ENCODE measurements at regions of chr7 and their contacts with region 1.

Region 1: DNA sequence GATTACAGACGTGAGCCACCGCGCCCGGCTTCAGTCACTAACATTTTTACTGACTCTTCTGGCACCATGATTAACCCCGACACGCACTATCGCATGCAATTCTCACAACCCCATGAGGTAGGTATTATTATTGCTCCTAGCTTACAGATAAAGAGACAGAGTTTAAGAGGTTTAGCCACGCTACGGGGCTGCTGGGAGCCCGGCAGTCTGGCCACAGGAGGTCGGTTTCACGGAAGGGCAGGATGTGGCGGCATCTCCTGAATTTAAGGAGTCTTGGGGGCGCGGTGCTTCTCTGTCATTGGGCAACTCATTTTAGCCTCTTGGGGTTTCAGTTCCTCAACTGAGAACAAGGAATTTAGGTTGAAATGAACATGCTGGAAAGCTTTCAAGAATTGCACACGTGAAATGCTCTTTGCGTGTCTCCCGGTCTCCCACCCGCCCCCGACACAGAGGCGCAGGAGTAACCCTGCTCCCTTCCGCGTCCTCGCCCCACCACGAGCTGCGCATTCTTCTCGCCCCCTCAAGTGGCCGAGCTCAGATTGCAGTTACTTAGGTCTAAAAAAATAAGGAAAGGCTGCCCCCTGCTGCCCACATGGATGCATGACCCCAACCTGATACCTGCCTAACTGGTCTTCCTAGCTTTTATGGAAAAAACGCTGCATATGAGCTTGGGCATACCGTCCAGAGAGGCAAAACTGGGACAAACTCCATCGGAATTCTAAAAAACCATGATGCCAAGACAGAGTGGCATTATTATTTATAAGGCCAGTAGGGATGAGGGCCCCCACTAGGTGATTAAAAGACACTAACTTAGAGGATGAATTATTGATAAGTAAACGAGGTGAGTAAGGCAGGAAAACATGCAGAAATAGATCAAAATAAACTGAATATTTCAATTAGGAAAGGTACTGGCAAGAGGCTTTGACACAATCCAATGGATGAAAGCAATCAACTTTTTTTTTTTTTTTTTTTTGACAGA is 12.4 kb downstream of the PRSS2 start:
- DNase-seq: peak; percentile 90
- H3K4me3 ChIP-seq: peak overlapping the region; percentile 38 to 52
- H3K27ac ChIP-seq: no peak overlapping the region
- H3K4me1 ChIP-seq: no peaks in the 10 kb centered on the region; a peak in 1 of 4 replicates
- H3K27me3 ChIP-seq: 0 out of 2 replicates have a peak, but pooled peaks cover 3% of the 10 kb centered on the region
- CTCF ChIP-seq: peak; percentile 99
- EP300 ChIP-seq: peak in 1 of 2 experiments; percentile 40; a peak in 1 of 4 replicates
- RAD21 ChIP-seq: peak; percentile 100

Region 2: GRCh38 chr7:141409801-141410329 is 1373.3 kb before region 1 on chr7:
- CTCF ChIA-PET with region 1: no interaction called
- POLR2A ChIA-PET with region 1: no interaction called
- DNase-seq: peak; percentile 68
- H3K4me3 ChIP-seq: no peak overlapping the region
- H3K27ac ChIP-seq: peak overlapping the region in 1 of 2 experiments; percentile 56; a peak in 2 of 4 replicates
- H3K4me1 ChIP-seq: peaks cover 0 to 16% of the 10 kb centered on the region in 2 experiments; a peak in 2 of 4 replicates
- H3K27me3 ChIP-seq: no peaks in the 10 kb centered on the region
- CTCF ChIP-seq: no peak
- EP300 ChIP-seq: 0 out of 4 replicates have a peak, but pooled peaks of 1 of the 2 experiments have one; percentile 28
- RAD21 ChIP-seq: no peak

Region 3: GRCh38 chr7:142478479-142479072 is 304.6 kb before region 1 on chr7:
- CTCF ChIA-PET with region 1: interaction called, 13 read pairs
- POLR2A ChIA-PET with region 1: no interaction called
- DNase-seq: peak; percentile 52
- H3K4me3 ChIP-seq: no peak overlapping the region
- H3K27ac ChIP-seq: no peak overlapping the region
- H3K4me1 ChIP-seq: peaks cover 7 to 13% of the 10 kb centered on the region in 2 experiments; a peak in 2 of 4 replicates
- H3K27me3 ChIP-seq: no peaks in the 10 kb centered on the region
- CTCF ChIP-seq: peak; percentile 89
- EP300 ChIP-seq: peak in 1 of 2 experiments; percentile 56; a peak in 2 of 4 replicates
- RAD21 ChIP-seq: peak; percentile 71

Region 4: DNA sequence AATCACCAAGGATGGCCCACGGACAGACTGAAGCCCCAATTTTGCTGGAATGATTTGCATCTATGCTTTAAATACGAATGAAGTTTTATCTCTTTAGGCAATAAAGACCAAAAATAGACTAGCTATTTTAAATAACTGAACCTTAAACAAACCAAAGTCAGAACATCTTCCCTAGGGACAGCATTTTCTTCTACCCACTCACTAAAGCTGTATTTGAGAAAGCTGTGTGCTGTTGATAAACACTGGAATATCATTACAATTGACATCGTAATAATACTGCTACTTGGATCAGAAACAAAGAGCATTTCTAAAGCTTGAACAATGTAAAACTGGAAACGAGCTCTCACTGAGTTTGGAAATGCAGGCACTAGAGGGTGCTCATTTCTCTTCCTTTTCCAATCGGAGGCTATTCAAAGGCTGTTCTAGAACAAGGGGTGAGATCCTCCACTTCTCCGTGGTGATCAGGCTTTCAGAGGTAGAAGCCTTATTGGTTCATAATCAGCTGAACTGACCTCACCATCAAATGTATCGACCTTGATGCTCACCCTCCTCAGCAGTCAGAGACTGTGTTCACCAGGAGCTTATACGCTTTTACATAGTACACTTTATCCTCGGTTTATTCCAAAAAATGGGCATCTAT is 259.3 kb before region 1 on chr7:
- CTCF ChIA-PET with region 1: interaction called, 64 read pairs
- POLR2A ChIA-PET with region 1: interaction called, 4 read pairs
- DNase-seq: no peak
- H3K4me3 ChIP-seq: no peak overlapping the region
- H3K27ac ChIP-seq: no peak overlapping the region
- H3K4me1 ChIP-seq: peaks cover 0 to 11% of the 10 kb centered on the region in 2 experiments; a peak in 2 of 4 replicates
- H3K27me3 ChIP-seq: peaks cover 63% of the 10 kb centered on the region; the same call in 1 of the 2 replicates
- CTCF ChIP-seq: peak; percentile 39; the same call in 1 of the 2 replicates
- EP300 ChIP-seq: no peak
- RAD21 ChIP-seq: peak; percentile 14; the same call in 1 of the 2 replicates

Region 5: GRCh38 chr7:142626420-142627035 is 156.7 kb before region 1 on chr7:
- CTCF ChIA-PET with region 1: interaction called, 488 read pairs
- POLR2A ChIA-PET with region 1: no interaction called
- DNase-seq: peak; percentile 52
- H3K4me3 ChIP-seq: no peak overlapping the region
- H3K27ac ChIP-seq: no peak overlapping the region
- H3K4me1 ChIP-seq: no peaks in the 10 kb centered on the region; a peak in 1 of 4 replicates
- H3K27me3 ChIP-seq: no peaks in the 10 kb centered on the region
- CTCF ChIP-seq: peak; percentile 73
- EP300 ChIP-seq: no peak
- RAD21 ChIP-seq: peak; percentile 31; the same call in 1 of the 2 replicates

Region 6: GRCh38 chr7:142689439-142690120 is 93.6 kb before region 1 on chr7:
- CTCF ChIA-PET with region 1: interaction called, 32 read pairs
- POLR2A ChIA-PET with region 1: no interaction called
- DNase-seq: no peak
- H3K4me3 ChIP-seq: no peak overlapping the region
- H3K27ac ChIP-seq: no peak overlapping the region
- H3K4me1 ChIP-seq: no peaks in the 10 kb centered on the region
- H3K27me3 ChIP-seq: no peaks in the 10 kb centered on the region
- CTCF ChIP-seq: peak; percentile 39
- EP300 ChIP-seq: no peak
- RAD21 ChIP-seq: peak; percentile 31; the same call in 1 of the 2 replicates

Region 7: DNA sequence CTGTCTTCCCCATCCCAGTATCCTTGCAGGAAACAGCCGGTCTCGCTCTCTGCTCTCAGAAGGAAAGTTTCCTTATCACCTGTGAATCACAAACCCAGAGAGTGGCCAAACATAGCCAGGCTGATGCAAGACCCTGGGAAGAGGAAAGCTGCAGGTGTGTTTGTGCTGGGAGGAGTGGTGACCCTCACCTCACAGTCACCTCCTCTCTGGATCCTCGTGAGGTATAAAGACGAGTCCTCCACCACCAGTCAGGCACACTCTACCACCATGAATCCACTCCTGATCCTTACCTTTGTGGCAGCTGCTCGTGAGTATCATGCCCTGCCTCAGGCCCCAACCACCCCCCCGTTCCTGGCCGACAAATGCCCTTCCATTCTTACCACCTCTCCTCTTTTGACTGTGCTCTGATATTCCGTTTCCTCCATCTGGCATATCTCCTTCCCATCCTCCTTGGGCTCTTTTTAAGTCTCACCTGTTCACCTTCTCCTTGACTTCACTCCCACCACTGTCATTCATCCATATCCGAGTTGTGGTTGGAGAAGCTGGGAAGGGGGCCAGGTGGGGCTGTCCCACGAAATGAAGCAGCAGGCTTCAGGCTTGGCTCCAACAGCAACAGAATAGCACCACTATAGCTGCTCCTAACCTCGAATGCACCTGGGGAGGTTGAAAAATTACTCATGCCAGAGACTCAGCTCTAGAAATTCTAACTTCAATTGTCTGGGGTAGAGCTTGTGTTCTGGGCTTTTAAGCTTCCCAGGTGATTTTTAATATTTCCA is 33.8 kb before region 1 on chr7 and contains the start of gene PRSS1:
- CTCF ChIA-PET with region 1: interaction called, 13 read pairs
- POLR2A ChIA-PET with region 1: no interaction called
- DNase-seq: no peak
- H3K4me3 ChIP-seq: no peak within 1 kb of the TSS
- H3K27ac ChIP-seq: no peak within 1 kb of the TSS
- H3K4me1 ChIP-seq: peaks cover 0 to 10% of the 10 kb centered on the region in 2 experiments; a peak in 1 of 4 replicates
- H3K27me3 ChIP-seq: peaks cover 23% of the 10 kb centered on the region; the same call in 1 of the 2 replicates
- CTCF ChIP-seq: no peak
- EP300 ChIP-seq: no peak
- RAD21 ChIP-seq: no peak
- polyA plus RNA-seq, gene PRSS1: not detected in 2 replicates

Region 8: GRCh38 chr7:142866361-142867058 is 83.3 kb after region 1 on chr7:
- CTCF ChIA-PET with region 1: interaction called, 27 read pairs
- POLR2A ChIA-PET with region 1: no interaction called
- DNase-seq: peak; percentile 88
- H3K4me3 ChIP-seq: no peak overlapping the region
- H3K27ac ChIP-seq: no peak overlapping the region
- H3K4me1 ChIP-seq: no peaks in the 10 kb centered on the region
- H3K27me3 ChIP-seq: peaks cover 11% of the 10 kb centered on the region
- CTCF ChIP-seq: peak; percentile 77
- EP300 ChIP-seq: no peak
- RAD21 ChIP-seq: peak; percentile 69

Region 9: GRCh38 chr7:143069912-143070500 is 286.8 kb after region 1 on chr7:
- CTCF ChIA-PET with region 1: no interaction called
- POLR2A ChIA-PET with region 1: no interaction called
- DNase-seq: no peak
- H3K4me3 ChIP-seq: no peak overlapping the region
- H3K27ac ChIP-seq: no peak overlapping the region
- H3K4me1 ChIP-seq: no peaks in the 10 kb centered on the region
- H3K27me3 ChIP-seq: peaks cover 8% of the 10 kb centered on the region; the same call in 1 of the 2 replicates
- CTCF ChIP-seq: no peak
- EP300 ChIP-seq: no peak
- RAD21 ChIP-seq: no peak

Measured in SK-N-SH (cell line).